Left ventricle myocardium superior (tissue), 1 donor: ENCODE measurements at regions of chr22 and their contacts with region 1.

Region 1: GRCh38 chr22:18077639-18078328 is at the start of gene PEX26:
- DNase-seq: peak; percentile 95
- ATAC-seq: peak; percentile 96
- total RNA-seq, gene PEX26: 20.6 TPM

Region 2: GRCh38 chr22:17785185-17786184 is 292.3 kb before region 1 on chr22:
- intact Hi-C with region 1: no loop called
- DNase-seq: peak; percentile 78
- ATAC-seq: peak; percentile 32

Region 3: DNA sequence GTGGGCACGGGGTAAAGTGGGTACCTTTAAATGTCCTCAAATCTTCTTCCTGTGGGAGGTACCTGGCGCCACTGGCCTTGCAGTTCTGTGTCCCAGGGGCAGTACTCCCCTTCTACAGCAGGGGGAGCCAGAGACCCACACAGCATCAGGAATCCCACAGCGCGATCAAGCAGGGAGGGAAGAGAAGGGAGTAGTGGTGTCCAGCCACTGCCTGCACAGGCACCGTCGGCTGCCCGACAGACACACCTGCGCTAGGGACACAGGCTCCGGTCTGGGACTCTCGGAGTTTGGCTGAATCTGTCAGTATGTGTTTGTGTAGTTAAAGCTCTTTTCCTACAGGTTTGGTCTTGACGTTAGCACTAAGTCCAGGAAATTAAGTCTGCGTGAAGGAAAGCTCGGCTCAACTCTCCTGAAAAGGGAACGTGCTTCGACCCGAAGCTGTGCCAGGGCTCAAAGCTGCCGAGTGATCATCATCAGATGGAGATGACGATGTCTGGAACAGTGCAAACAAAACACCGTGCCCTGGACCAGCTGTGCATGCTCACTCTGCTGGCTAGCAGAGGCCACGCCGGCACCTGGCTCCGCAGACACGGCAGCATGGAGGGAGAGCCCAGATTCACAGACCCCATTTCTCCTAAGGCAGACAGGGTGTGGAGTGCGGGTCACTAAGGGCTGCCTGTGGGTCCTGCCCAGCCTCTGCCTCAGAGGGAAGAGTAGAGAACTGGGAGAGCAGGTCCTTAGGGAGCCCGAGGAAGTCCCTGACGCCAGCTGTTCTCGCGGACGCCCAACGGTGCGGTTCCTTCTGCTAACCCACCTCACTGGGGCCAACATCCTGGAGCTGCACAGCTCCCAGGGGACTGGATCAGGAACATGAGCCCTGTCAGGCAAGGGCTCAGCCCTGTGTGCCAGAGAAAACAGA is 247.5 kb before region 1 on chr22:
- intact Hi-C with region 1: loop called (anchors 5 kb)
- DNase-seq: peak; percentile 88
- ATAC-seq: peak; percentile 75

Region 4: GRCh38 chr22:17878941-17879340 is 198.8 kb before region 1 on chr22:
- intact Hi-C with region 1: no loop called
- DNase-seq: no peak
- ATAC-seq: no peak

Region 5: GRCh38 chr22:17891481-17892167 is 186.2 kb before region 1 on chr22:
- intact Hi-C with region 1: loop called (anchors 10 kb)
- DNase-seq: peak; percentile 85
- ATAC-seq: peak; percentile 77

Region 6: DNA sequence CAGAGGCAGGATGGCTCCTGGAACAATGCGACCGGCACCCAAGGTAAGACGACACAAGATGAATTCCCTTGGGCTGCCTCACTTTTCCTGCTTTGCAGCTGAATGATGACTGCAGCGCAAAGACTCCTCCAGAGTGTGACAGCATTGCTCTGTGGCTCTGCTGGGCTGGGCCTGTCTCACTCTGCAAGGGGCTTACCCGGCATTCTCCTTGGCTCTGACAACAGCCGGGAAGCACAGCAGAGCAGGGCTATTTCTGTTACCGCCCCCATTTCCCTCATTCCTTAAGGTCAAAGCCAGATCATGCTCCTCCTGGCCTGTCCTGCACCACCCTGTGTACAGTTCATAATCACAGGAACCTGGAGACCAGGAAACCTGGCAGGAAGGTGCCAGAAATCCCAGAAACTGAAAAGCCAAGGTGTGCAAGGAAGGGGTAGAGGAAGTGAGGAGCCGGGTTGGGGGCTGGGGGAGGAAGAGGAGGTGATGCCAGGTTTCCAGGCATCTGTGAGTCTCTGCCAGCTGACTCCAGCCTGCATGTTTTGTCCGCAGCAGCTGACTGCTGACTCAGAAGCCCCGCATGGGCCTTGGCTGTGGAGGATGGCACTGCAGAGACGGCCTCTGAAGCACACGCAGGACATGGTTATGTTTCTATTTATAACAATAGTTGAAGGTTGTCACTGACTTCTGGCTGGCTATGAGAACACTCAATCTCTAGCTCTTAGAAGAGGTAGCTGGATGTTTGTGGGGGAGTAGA is 167.0 kb before region 1 on chr22:
- intact Hi-C with region 1: no loop called
- DNase-seq: peak; percentile 87
- ATAC-seq: peak; percentile 89

Region 7: DNA sequence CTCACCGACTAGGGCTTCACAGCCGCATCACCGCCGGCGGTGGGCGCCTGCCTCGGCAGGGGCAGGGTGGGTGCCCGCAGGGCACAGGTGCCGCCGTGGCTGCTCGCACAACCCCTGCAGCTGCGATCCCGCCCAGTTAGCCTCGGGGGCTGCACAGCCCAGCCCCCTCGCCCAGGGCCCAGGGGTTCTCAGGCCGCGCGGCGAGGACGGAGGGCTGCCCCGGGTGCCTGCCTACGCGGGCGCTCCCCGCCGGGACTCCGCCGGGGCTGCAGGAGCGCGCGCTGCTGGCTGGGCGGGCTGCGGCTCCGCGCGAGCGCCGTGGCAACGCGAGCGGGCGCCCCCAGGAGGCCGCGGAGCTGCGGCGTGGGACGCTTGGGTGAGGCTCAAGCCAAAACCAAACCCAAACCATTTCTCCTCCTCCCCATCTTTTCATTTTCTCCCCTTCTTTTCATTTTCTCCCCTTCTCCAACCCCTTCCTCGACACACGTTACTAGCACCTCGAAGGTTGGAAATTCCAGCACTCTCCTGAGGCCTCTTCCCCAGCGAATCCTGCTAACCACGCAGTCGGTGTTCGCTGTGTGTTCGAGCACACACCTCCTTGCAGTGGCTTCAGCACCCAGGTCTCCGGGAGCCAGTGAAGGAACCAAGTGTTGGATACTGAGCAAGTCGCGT is 53.4 kb before region 1 on chr22 and contains the start of gene MICAL3:
- intact Hi-C with region 1: loop called (anchors 10 kb)
- DNase-seq: peak; percentile 86
- ATAC-seq: peak; percentile 88
- total RNA-seq, gene MICAL3: 90.4 TPM

Region 8: DNA sequence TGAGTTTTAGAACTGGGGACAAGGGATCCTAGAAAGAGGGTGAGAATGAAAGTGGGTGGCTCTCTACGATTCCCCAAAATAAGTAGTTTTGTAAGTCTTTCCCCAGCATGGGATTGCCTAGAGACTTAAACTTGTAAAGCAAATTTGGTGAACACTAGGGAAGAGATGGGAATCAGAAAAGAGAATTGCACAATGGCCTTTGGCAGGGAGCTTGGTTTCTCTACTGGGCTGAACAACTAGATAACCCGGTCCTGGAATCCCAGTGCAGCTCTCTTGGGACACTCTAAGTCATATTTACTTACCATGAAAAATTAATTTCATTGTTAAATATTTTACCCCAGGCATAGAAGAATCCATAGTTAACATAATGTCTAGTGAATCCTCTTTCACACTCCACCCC is 55.7 kb after region 1 on chr22:
- intact Hi-C with region 1: no loop called
- DNase-seq: no peak
- ATAC-seq: peak; percentile 83